Activated CD8-positive, alpha-beta memory T cell treated with anti-CD3 and anti-CD28 coated beads, Interleukin-2, amount 10 ng/mL, durations not matched to agents 7 days and 5 days (primary cell): ENCODE measurements at regions of chr20 and their contacts with region 1.

Region 1: GRCh38 chr20:47677635-47678453 is 107.4 kb downstream of the SULF2 start:
- DNase-seq: peak; percentile 65
- ATAC-seq: peak; percentile 71
- H3K4me3 Mint-ChIP-seq: no peak overlapping the region
- H3K27ac Mint-ChIP-seq: no peak overlapping the region
- H3K4me1 Mint-ChIP-seq: no peaks in the 10 kb centered on the region
- H3K27me3 Mint-ChIP-seq: no peaks in the 10 kb centered on the region

Region 2: DNA sequence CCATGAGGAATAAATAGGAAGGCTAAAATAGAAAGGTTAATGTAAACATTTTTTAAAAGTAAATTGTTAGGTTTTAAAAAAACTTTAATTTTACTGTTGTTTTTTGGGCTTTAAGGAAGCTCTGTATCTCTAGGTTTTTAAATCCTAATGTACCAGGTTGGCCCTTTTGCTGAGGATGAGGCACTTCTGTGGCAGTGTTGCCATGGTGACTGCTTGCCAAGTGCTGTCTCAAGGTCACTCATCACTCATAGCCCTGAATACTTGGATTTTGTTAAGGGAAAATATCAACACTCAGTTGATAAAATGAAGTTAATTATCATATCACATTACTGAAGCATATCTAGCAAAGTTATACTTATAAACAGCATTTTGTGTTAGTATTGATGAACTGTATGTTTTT is 126.0 kb before region 1 on chr20:
- CTCF ChIA-PET with region 1: no interaction called
- DNase-seq: no peak
- ATAC-seq: no peak
- H3K4me3 Mint-ChIP-seq: no peak overlapping the region
- H3K27ac Mint-ChIP-seq: no peak overlapping the region
- H3K4me1 Mint-ChIP-seq: peaks cover 22% of the 10 kb centered on the region
- H3K27me3 Mint-ChIP-seq: no peaks in the 10 kb centered on the region

Region 3: DNA sequence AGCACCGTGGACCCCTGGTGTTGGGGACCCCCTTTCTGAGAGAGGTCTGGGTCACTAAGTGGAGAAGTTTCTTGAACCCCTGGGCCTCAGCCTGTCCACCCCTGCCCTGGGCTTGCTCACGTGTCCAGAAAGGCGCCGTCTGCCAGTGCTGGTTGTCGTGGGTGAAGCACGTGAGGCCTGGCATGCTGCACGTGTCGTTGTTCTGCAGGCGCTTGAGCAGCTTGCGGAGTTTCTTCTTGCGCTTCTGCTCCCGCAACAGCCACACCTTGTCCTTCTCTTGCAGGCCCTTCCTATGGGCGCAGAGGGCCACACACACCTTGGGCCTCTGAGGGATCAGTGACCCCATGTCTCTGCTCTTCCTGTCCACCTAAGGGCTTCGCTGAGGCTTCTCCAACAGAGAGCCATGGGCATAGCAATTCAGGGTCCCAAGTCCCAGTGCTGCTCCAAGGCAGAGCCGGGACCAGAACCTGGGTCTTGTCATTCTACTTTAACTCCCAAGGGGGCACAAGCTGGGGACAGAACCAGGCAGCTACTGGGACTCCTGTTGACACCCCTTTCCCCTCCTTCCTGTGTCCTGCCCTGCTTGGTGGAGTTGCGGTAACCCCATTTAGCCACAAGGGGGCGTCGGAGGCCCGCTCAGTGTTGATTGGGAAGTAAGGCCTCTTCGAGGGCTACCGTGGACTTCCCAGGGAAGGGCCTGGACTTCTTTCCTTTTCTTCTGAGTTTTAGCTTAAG is 14.3 kb before region 1 on chr20:
- CTCF ChIA-PET with region 1: interaction called, 10 read pairs
- DNase-seq: peak; percentile 85
- ATAC-seq: peak; percentile 78
- H3K4me3 Mint-ChIP-seq: no peak overlapping the region
- H3K27ac Mint-ChIP-seq: peak overlapping the region; percentile 29
- H3K4me1 Mint-ChIP-seq: peaks cover 8% of the 10 kb centered on the region
- H3K27me3 Mint-ChIP-seq: no peaks in the 10 kb centered on the region

Region 4: GRCh38 chr20:47693692-47694354 is 16.0 kb after region 1 on chr20:
- CTCF ChIA-PET with region 1: interaction called, 10 read pairs
- DNase-seq: no peak
- ATAC-seq: no peak
- H3K4me3 Mint-ChIP-seq: no peak overlapping the region
- H3K27ac Mint-ChIP-seq: no peak overlapping the region
- H3K4me1 Mint-ChIP-seq: peaks cover 8% of the 10 kb centered on the region
- H3K27me3 Mint-ChIP-seq: peaks cover 18% of the 10 kb centered on the region